ENCODE measurements at regions of chr11 and their contacts with region 1.

Region 1: GRCh38 chr11:110249051-110249450 is 47.4 kb downstream of the RDX start:
- DNase-seq: peak in 1 of 35 experiments; percentile 16
- ATAC-seq: no peak
- H3K4me3 ChIP-seq: no peak overlapping the region
- H3K4me3 Mint-ChIP-seq: no peak overlapping the region
- H3K27ac ChIP-seq: no peak overlapping the region
- H3K27ac Mint-ChIP-seq: peak overlapping the region in 1 of 2 donors; percentile 23
- H3K4me1 ChIP-seq: no peaks in the 10 kb centered on the region
- H3K4me1 Mint-ChIP-seq: no peaks in the 10 kb centered on the region
- H3K27me3 ChIP-seq: no peaks in the 10 kb centered on the region
- H3K27me3 Mint-ChIP-seq: no peaks in the 10 kb centered on the region

Region 2: DNA sequence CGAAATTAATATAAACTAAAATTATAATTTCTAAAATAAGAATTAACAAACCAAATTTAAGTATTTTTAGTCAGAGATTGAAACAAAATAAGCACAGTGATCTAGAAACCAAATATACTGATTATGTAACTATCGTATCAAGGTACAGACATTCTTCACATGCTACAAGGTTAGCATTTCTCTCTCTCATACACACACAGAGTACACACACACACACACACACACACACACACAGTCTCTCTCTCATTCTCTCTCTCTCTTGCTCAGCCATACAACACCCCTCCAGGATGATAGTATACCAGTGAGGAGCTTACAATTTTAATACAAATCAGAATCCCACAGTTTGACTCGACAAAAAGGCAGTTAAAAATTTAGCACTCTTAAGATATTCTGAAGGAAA is 18.7 kb before region 1 on chr11:
- CTCF ChIA-PET with region 1: no interaction called
- POLR2A ChIA-PET with region 1: interaction called in 1 of 2 experiments, 11 read pairs
- DNase-seq: no peak
- ATAC-seq: no peak
- H3K4me3 ChIP-seq: no peak overlapping the region
- H3K4me3 Mint-ChIP-seq: no peak overlapping the region
- H3K27ac ChIP-seq: no peak overlapping the region
- H3K27ac Mint-ChIP-seq: no peak overlapping the region
- H3K4me1 ChIP-seq: no peaks in the 10 kb centered on the region
- H3K4me1 Mint-ChIP-seq: no peaks in the 10 kb centered on the region
- H3K27me3 ChIP-seq: no peaks in the 10 kb centered on the region
- H3K27me3 Mint-ChIP-seq: no peaks in the 10 kb centered on the region

Region 3: GRCh38 chr11:110305169-110306018 is 56.3 kb after region 1 on chr11:
- CTCF ChIA-PET with region 1: no interaction called
- POLR2A ChIA-PET with region 1: interaction called in 1 of 2 experiments, 10 read pairs
- DNase-seq: no peak
- ATAC-seq: no peak
- H3K4me3 ChIP-seq: no peak overlapping the region
- H3K4me3 Mint-ChIP-seq: no peak overlapping the region
- H3K27ac ChIP-seq: no peak overlapping the region
- H3K27ac Mint-ChIP-seq: no peak overlapping the region
- H3K4me1 ChIP-seq: no peaks in the 10 kb centered on the region
- H3K4me1 Mint-ChIP-seq: peaks cover 5 to 6% (median 5%) of the 10 kb centered on the region in 3 donors
- H3K27me3 ChIP-seq: no peaks in the 10 kb centered on the region
- H3K27me3 Mint-ChIP-seq: no peaks in the 10 kb centered on the region